ENCODE measurements at regions of chr18 and their contacts with region 1.

Region 1: DNA sequence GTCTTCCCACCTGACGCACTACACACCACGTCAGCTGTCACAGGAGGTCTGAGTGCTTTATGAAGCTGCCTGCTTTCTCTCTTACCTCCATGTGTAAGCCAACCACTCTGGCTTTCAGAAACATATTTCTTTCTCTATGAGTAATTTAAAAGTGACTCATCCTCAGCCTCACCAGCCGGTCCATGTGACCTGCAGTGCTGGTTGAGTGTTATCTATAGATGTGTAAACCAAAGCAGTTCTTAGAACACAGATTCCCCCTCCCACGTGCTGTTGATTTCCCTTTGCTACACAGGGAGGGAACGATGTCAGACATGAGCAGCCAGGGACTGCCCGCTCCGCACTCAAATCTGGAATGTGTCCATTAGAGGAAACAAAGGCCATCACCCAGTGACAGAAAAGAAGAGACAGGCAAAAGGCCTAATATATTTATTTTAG is 157.8 kb downstream of the BCL2 start:
- DNase-seq: peak; percentile 94
- H3K4me3 Mint-ChIP-seq: peak overlapping the region; percentile 83
- H3K27ac Mint-ChIP-seq: peak overlapping the region; percentile 98
- H3K4me1 Mint-ChIP-seq: peaks cover 87% of the 10 kb centered on the region
- H3K27me3 Mint-ChIP-seq: no peaks in the 10 kb centered on the region

Region 2: GRCh38 chr18:62844850-62845643 is 316.7 kb before region 1 on chr18:
- intact Hi-C with region 1: loop called (anchors 5 kb)
- DNase-seq: peak; percentile 72
- H3K4me3 Mint-ChIP-seq: peak overlapping the region; percentile 80
- H3K27ac Mint-ChIP-seq: peak overlapping the region; percentile 94
- H3K4me1 Mint-ChIP-seq: peaks cover 30% of the 10 kb centered on the region
- H3K27me3 Mint-ChIP-seq: no peaks in the 10 kb centered on the region

Region 3: DNA sequence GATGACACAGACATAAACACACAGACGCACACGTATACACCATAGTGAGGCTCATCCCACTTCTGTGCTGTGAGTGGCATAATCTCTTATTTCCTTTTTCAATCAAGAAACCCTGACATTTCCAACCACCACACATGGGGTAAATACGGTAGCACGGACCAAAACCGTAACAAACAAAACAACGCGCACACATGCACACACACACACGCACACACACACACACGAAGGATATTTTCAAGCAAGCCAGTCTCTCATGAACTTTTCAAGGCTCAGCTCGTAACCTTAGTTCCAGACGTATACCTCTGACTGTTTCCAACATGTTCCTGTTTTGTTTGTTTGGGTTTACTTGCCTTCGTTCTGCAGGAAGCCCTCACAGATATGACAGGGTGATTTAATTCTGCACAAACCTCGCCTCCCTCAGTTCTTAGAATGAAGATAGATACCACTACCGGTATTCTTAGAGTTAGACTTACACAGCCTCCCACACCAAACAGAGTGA is 38.0 kb after region 1 on chr18:
- intact Hi-C with region 1: loop called (anchors 1 kb)
- DNase-seq: peak; percentile 90
- H3K4me3 Mint-ChIP-seq: no peak overlapping the region
- H3K27ac Mint-ChIP-seq: no peak overlapping the region
- H3K4me1 Mint-ChIP-seq: peaks cover 31% of the 10 kb centered on the region
- H3K27me3 Mint-ChIP-seq: no peaks in the 10 kb centered on the region

Region 4: DNA sequence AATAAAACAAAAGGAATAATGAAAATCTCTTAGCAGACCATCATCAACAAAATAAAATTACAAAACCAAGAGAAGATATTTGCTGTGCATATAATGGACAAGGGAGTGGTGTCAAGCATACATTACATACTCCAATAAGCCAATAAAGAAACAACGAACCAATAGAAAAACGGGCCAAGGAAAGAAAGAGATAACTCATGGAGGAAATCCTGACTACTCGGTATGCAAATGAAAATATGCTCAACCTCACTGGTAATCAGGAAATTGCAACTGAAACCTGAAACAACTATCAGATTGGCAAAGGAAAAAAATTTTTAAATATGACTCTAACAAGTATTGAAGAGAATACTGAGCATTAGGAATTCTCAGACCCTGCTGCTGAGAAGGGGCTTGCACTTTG is 73.1 kb after region 1 on chr18:
- intact Hi-C with region 1: loop called (anchors 1 kb)
- DNase-seq: no peak
- H3K4me3 Mint-ChIP-seq: peak overlapping the region; percentile 65
- H3K27ac Mint-ChIP-seq: peak overlapping the region; percentile 91
- H3K4me1 Mint-ChIP-seq: peaks cover 70% of the 10 kb centered on the region
- H3K27me3 Mint-ChIP-seq: no peaks in the 10 kb centered on the region

Region 5: DNA sequence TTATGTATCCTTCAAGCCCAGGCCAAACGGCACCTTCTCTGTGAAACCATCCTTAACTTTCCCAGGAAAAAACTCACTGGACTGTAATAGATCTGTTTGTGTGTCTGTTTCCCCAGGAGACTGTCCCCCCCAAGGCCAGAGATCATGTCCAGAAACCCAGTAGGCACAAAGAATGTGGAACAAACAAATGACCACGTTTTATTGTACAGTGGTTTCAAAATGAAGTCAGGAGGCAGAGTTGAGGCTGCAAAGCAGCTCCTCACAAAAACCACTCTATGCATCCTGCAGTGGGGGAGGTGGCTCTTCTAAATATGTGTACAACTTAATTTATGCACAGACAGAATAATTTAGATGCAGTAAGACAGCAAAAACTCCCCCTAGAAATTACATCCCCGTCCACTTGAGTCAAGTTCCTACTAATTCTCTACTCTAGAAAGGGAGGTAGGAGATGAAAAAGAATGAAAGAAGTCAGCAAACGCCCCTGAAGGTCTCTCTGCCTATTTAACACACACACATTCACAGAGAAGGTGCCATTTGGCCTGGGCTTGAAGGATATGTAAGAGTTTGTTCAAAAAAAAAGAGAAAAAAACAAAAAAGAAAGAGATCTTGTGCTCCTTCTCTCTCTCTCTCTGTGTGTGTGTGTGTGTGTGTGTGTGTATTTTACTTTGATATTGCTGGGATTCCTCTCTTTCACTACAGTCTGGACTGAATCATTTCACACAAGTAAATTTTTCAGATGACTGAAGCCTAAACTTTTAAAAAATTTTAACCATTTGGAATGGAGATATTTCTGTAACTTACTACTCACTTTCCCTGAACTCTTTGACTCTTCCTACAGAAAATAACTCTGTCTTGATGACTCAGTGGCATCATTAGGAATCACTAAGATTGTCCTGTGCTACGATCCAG is 138.3 kb after region 1 on chr18:
- intact Hi-C with region 1: loop called (anchors 1 kb)
- DNase-seq: peak; percentile 81
- H3K4me3 Mint-ChIP-seq: peak overlapping the region; percentile 81
- H3K27ac Mint-ChIP-seq: peak overlapping the region; percentile 98
- H3K4me1 Mint-ChIP-seq: peaks cover 81% of the 10 kb centered on the region
- H3K27me3 Mint-ChIP-seq: no peaks in the 10 kb centered on the region

Region 6: DNA sequence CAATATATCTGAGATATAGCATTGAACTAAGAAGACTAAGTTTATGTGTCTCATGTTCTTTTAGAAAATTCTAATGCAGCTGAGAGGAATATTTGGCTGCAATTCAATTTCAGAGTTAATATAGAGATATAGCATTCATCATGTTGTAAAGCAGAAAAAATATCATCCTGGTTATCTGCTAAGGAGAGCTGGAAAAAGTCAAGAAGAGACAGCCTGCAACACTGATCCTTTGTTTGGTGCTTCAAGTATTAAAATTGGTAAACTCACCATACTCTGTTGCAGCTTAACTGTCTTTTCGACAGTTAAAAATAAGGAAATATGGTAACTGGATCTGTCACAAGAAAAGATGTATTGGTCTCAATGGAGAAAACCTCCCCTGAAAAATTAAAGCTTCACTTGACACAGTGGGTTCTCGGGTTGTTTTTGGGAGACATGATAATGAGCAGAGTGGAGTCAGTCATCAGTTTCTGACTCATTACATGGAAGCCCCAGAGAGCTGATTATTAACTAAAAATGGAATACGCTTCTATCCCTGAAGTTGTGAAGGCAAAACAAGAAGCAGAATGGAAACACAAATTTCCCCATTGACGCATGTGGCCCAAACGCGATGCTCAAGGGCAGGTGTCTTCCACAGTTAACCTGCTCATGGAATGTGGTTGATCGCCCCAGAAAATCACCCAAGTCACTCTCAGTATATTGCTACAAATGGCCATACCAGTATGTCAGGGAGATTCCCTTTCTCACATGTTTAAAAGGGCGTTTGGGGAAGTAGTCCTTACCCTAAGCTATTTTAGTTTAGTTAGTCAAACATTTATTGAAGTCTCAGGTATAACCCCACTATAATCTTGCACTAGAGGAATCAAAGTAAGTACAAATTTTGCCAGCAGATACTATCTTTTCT is 149.6 kb after region 1 on chr18:
- intact Hi-C with region 1: no loop called
- DNase-seq: no peak
- H3K4me3 Mint-ChIP-seq: no peak overlapping the region
- H3K27ac Mint-ChIP-seq: peak overlapping the region; percentile 39
- H3K4me1 Mint-ChIP-seq: peaks cover 70% of the 10 kb centered on the region
- H3K27me3 Mint-ChIP-seq: no peaks in the 10 kb centered on the region

Region 7: DNA sequence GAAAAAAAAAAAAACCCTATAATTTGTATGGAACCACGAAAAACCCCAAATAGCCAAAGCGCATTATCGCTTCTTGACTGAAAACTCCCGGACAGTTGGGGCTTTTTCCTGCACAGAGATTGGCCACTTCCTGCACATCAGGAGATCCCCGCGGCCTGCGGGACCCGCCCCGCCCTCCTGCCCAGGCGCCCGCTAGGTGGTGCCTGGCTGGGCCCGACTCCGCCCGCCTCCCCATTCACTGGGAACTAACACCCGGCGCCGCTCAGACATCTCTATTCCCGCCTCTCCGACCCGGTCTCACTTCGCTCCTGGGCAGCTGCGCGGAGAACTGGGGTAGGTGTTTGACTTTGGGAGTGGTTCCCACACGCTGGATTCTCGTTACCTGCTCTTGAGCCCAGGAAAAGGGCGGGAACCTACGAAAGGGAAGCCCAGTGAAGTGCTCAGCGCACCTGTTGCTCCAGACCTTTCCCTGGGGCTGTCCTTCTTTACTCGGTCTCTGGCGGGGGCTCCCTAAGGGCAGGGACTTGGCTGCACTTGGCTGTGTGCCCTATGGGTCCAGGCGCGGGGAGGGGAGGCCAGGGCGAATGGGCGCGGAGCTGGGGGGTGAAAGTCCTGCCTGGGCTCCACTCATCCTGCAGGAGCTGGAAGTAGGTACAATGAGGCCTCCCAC is 787.4 kb after region 1 on chr18 and contains the start of gene HMSD:
- intact Hi-C with region 1: loop called (anchors 1 kb)
- DNase-seq: peak; percentile 90
- H3K4me3 Mint-ChIP-seq: peak within 1 kb of the TSS; percentile 88
- H3K27ac Mint-ChIP-seq: peak within 1 kb of the TSS; percentile 91
- H3K4me1 Mint-ChIP-seq: peaks cover 37% of the 10 kb centered on the region
- H3K27me3 Mint-ChIP-seq: peaks cover 15% of the 10 kb centered on the region
- total RNA-seq, gene HMSD: 16.8 and 25.0 TPM in 2 replicates